ENCODE measurements at regions of chr17 and their contacts with region 1.

Region 1: DNA sequence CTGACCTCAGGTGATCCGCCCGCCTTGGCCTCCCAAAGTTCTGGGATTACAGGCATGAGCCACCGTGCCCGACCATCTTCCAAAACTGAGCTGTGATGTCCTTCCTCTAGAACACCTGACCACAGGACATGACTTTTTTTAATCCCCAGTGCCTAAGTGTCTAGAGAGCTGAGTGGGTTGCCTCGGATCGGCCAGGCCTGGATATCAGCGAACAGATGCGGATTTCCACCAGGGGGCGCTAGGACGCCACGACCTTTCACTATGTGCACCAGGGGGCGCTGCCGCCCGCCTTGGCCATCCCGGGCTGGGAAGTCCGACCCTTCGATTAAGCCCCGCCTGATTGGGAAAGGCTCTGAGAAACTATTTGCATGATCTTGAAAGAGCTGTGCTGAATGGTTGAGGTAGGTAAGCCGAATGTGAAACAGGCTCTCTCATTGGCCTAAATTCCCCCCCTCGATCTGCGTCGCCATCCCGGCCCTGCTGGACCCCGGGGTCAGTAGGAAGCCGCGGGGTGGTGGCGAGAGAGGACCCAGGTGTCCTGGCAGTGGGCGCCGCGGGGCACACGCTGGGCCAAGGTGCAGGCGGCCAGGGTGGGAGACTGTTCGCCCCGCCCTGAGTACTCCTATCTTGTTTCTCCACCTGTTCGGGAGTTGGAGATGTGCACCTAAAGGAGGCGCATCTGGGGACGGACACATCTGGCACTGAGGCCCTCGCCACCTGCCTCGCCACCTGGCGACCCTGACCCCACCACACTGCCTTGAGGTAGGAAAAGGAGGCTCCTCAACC is at the start of gene ACBD4:
- DNase-seq: peak; percentile 97 to 98
- H3K4me3 ChIP-seq: peak within 1 kb of the TSS; percentile 61 to 78 (median 70)
- H3K27ac ChIP-seq: peak within 1 kb of the TSS; percentile 84 to 93 (median 89)
- H3K4me1 ChIP-seq: peaks cover 27 to 57% (median 49%) of the 10 kb centered on the region in 4 donors
- H3K27me3 ChIP-seq: no peaks in the 10 kb centered on the region
- CTCF ChIP-seq: peak in 6 of 7 experiments; percentile 96 to 100 (median 100)
- EP300 ChIP-seq: no peak
- POLR2A ChIP-seq: no peak
- total RNA-seq, gene ACBD4: 4.6 to 24.6 (median 15.2) TPM

Region 2: GRCh38 chr17:45197555-45198334 is 62.4 kb after region 1 on chr17:
- intact Hi-C with region 1: loop called (anchors 5 kb)
- DNase-seq: peak; percentile 95 to 96
- H3K4me3 ChIP-seq: no peak overlapping the region
- H3K27ac ChIP-seq: peak overlapping the region; percentile 23 to 74 (median 32)
- H3K4me1 ChIP-seq: peaks cover 4 to 14% (median 10%) of the 10 kb centered on the region in 4 donors
- H3K27me3 ChIP-seq: no peaks in the 10 kb centered on the region
- CTCF ChIP-seq: peak in 6 of 7 experiments; percentile 94 to 99 (median 98)
- EP300 ChIP-seq: no peak
- POLR2A ChIP-seq: no peak